Activated naive CD4-positive, alpha-beta T cell treated with anti-CD3 and anti-CD28 coated beads for 36 hours (primary cell): ENCODE measurements at regions of chr2 and their contacts with region 1.

Region 1: DNA sequence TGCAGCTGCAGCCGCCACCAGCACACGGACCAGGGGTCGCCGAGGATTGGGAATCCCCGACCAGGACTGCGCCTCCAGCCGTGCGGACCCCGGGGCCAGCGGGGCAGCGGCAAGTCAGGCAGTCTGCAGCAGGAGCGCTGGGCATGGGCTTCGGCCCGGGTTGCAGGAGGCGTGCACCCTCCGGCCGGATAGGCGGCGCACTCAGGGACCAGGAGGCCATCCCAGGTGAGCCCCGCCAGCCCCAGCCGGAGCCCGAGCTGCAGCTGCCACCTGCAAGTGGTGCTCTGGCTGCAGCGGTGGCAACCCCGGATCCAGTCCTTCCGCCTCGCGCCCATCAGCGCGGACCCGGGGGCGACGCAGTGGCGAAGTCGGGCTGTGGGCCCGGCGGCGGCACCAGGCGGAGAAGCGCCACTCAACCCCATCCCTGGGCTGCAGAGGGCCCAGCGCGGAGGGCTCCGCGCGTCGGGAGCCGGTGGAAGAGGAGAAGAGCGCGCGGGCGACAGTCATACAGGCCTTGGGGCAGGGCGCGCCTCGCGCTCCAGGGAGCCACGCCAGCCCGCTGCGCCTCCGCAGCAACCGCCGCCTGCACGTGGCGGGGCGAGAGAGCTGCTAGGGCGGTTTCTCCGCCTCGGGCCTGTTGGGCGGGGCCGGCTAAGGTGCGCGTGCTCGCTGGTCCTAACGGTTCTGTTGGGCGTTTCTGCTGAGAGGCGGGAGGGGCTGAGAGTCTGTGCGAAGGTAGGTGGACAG is 73.9 kb downstream of the RPIA start:
- DNase-seq: peak; percentile 73
- H3K4me3 Mint-ChIP-seq: peak overlapping the region; percentile 77
- H3K27ac Mint-ChIP-seq: peak overlapping the region; percentile 27
- H3K4me1 Mint-ChIP-seq: peaks cover 11% of the 10 kb centered on the region
- H3K27me3 Mint-ChIP-seq: peaks cover 13% of the 10 kb centered on the region

Region 2: GRCh38 chr2:88753833-88754584 is 11.3 kb before region 1 on chr2:
- CTCF ChIA-PET with region 1: no interaction called
- intact Hi-C with region 1: loop called (anchors 1 kb)
- DNase-seq: peak; percentile 79
- H3K4me3 Mint-ChIP-seq: no peak overlapping the region
- H3K27ac Mint-ChIP-seq: peak overlapping the region; percentile 98
- H3K4me1 Mint-ChIP-seq: peaks cover 57% of the 10 kb centered on the region
- H3K27me3 Mint-ChIP-seq: no peaks in the 10 kb centered on the region